Activated CD4-positive, alpha-beta T cell treated with anti-CD3 and anti-CD28 coated beads for 36 hours (primary cell): ENCODE measurements at regions of chr5 and their contacts with region 1.

Region 1: GRCh38 chr5:34929150-34929719 is at the start of gene DNAJC21:
- DNase-seq: peak; percentile 99
- ATAC-seq: peak; percentile 95
- H3K4me3 Mint-ChIP-seq: peak within 1 kb of the TSS; percentile 90
- H3K27ac Mint-ChIP-seq: peak within 1 kb of the TSS; percentile 93
- H3K4me1 Mint-ChIP-seq: peaks cover 43% of the 10 kb centered on the region
- H3K27me3 Mint-ChIP-seq: no peaks in the 10 kb centered on the region
- total RNA-seq, gene DNAJC21: 58.5 to 58.6 TPM

Region 2: GRCh38 chr5:34007621-34008600 is 921.3 kb before region 1 on chr5 and contains the start of gene AMACR:
- CTCF ChIA-PET with region 1: no interaction called
- POLR2A ChIA-PET with region 1: no interaction called
- intact Hi-C with region 1: loop called (anchors 1 to 10 kb)
- DNase-seq: peak; percentile 96
- ATAC-seq: peak; percentile 95
- H3K4me3 Mint-ChIP-seq: peak within 1 kb of the TSS; percentile 77
- H3K27ac Mint-ChIP-seq: peak within 1 kb of the TSS; percentile 90
- H3K4me1 Mint-ChIP-seq: peaks cover 32% of the 10 kb centered on the region
- H3K27me3 Mint-ChIP-seq: no peaks in the 10 kb centered on the region
- total RNA-seq, gene AMACR: 3.3 to 6.0 TPM

Region 3: DNA sequence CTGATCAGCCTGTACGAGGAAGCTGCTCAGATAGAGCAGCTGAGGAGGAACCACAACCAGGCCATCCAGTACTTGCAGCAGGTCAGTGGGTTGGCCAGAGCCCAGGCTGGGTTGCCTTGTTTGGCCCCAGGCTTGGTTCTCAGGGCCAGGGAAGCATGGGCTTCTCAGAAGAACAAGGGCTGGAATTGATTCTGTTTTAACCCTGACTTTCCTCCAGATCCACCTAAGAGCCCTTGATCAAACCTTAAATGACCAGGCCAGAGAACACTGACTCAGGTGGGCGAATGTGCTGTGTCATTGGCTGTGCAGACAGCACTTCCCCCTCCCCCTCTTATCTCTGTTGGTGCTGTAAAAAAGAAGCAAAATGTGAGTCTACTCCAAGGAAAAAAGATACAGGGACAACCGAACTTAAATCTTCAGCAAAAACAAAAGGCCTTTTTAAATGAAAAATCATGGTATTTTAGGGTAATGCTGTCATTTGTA is 62.2 kb before region 1 on chr5:
- CTCF ChIA-PET with region 1: no interaction called
- POLR2A ChIA-PET with region 1: no interaction called
- intact Hi-C with region 1: no loop called
- DNase-seq: no peak
- ATAC-seq: no peak
- H3K4me3 Mint-ChIP-seq: no peak overlapping the region
- H3K27ac Mint-ChIP-seq: no peak overlapping the region
- H3K4me1 Mint-ChIP-seq: no peaks in the 10 kb centered on the region
- H3K27me3 Mint-ChIP-seq: no peaks in the 10 kb centered on the region

Region 4: GRCh38 chr5:35627616-35628015 is 698.4 kb after region 1 on chr5:
- CTCF ChIA-PET with region 1: no interaction called
- POLR2A ChIA-PET with region 1: no interaction called
- intact Hi-C with region 1: no loop called
- DNase-seq: no peak
- ATAC-seq: no peak
- H3K4me3 Mint-ChIP-seq: no peak overlapping the region
- H3K27ac Mint-ChIP-seq: no peak overlapping the region
- H3K4me1 Mint-ChIP-seq: peaks cover 35% of the 10 kb centered on the region
- H3K27me3 Mint-ChIP-seq: no peaks in the 10 kb centered on the region

Region 5: DNA sequence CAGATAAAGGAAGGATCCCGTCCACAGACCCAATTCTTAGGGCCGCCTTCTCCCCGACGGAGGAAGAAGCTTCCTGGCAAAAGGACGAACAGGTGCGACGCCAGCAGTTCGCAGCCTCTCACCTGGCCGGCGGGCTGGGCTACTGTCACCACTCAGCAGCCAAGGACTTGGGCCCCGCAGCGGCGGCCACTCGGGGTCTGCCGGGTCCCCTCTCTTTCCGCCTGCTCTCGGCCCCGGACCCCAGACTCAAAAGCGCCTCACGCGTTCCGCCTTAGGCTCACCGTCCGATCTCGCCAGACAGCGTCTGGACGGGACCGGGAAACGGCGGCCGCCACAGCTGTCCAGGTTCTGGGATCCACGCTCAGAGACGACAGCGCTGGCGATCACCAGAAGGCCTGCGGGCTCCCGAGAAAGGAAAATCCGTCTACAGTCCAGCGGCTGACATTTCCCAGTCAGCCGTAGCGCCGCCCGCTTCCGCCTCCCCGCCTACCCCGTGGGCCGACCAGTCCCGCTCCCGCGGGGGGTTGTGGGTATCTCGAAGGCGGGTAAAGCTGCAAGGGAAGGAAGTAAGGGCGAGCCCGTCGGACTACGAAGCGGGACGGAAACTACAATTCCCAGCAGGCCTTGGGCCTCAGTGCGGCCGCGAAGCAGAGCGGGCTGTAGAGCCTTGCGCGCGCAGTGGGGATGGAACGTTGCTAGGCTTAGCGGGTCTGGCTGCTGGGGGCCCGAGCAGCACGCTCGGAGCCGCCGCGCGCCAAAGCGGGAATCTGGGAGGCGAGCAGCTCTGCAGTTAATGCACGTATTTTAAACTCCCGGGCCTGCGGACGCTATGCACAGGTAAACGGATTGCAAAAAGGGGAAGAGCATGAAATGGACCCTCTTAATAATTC is 1222.4 kb after region 1 on chr5 and contains the starts of genes LMBRD2 and SKP2:
- CTCF ChIA-PET with region 1: no interaction called
- POLR2A ChIA-PET with region 1: no interaction called
- intact Hi-C with region 1: loop called in 1 of 2 experiments (anchors 5 kb)
- DNase-seq: peak; percentile 98
- ATAC-seq: peak; percentile 99
- H3K4me3 Mint-ChIP-seq: peak within 1 kb of the TSS; percentile 97
- H3K27ac Mint-ChIP-seq: peak within 1 kb of the TSS; percentile 91
- H3K4me1 Mint-ChIP-seq: peaks cover 55% of the 10 kb centered on the region
- H3K27me3 Mint-ChIP-seq: no peaks in the 10 kb centered on the region
- total RNA-seq, gene LMBRD2: 9.3 to 10.2 TPM
- total RNA-seq, gene SKP2: 48.0 to 56.8 TPM